ENCODE measurements at regions of chrX and their contacts with region 1.

Region 1: DNA sequence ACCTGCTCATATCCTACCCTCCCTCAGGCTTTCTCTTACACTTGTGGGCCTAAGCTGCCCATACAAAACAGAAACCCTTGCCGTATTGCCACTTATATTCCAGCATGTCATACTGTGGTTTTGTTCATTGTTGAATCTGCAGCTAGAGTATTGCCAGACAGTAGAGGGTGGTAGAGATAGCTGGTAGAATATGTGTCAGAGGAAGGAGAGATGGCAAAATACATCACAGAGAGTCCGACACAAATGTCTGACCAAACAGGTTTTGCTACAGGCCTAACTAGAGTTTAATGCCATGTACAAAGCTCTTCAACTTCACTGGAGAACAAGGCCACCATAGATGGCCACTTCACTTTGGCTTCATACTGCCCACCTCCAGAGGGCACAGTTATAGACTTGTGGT is 160.1 kb downstream of the EFHC2 start:
- DNase-seq: no peak
- H3K4me3 ChIP-seq: no peak overlapping the region
- H3K27ac ChIP-seq: no peak overlapping the region
- H3K4me1 ChIP-seq: no peaks in the 10 kb centered on the region
- CTCF ChIP-seq: no peak

Region 2: GRCh38 chrX:43618361-43619205 is 564.7 kb before region 1 on chrX:
- CTCF ChIA-PET with region 1: no interaction called
- POLR2A ChIA-PET with region 1: interaction called, 10 read pairs
- intact Hi-C with region 1: no loop called
- DNase-seq: no peak
- H3K4me3 ChIP-seq: no peak overlapping the region
- H3K27ac ChIP-seq: no peak overlapping the region
- H3K4me1 ChIP-seq: no peaks in the 10 kb centered on the region
- CTCF ChIP-seq: no peak

Region 3: DNA sequence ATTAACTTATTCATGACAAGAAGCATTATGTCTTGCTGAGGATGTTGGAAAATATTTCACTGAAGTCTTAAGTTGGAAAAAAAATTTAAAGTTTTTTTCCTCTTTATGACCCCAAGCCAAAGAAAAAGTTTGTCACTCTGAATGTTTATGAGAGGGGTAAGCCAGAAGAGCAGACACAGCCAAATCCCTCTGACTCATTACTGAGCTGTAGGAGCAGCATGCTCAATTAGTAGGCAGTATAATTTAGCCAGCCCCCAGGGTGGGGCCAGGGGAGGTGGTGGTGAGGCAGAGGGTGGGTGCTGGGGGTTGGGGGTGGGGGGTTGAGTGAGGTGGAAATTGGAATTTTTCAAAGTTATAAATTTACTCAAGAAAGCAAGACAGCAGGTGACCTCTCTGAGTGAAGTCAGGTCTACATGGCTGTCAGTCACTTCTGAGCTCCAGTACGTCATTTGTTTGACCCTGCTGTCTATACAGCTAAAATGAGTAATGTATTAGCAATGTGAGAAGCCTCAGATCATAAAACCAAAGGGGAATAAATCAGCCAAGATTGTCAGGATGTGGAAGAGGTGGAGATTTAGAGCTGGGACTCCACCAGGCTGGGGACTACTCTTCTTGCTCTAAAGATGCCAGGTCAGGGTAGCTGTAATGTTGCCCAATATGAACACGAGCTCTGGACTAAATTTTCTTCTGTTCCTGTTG is 111.3 kb before region 1 on chrX:
- CTCF ChIA-PET with region 1: no interaction called
- POLR2A ChIA-PET with region 1: no interaction called
- intact Hi-C with region 1: no loop called
- DNase-seq: no peak
- H3K4me3 ChIP-seq: no peak overlapping the region
- H3K27ac ChIP-seq: no peak overlapping the region
- H3K4me1 ChIP-seq: no peaks in the 10 kb centered on the region
- CTCF ChIP-seq: no peak

Measured in OCI-LY7 (cell line).